Caco-2 (cell line): ENCODE measurements at regions of chr1 and their contacts with region 1.

Region 1: DNA sequence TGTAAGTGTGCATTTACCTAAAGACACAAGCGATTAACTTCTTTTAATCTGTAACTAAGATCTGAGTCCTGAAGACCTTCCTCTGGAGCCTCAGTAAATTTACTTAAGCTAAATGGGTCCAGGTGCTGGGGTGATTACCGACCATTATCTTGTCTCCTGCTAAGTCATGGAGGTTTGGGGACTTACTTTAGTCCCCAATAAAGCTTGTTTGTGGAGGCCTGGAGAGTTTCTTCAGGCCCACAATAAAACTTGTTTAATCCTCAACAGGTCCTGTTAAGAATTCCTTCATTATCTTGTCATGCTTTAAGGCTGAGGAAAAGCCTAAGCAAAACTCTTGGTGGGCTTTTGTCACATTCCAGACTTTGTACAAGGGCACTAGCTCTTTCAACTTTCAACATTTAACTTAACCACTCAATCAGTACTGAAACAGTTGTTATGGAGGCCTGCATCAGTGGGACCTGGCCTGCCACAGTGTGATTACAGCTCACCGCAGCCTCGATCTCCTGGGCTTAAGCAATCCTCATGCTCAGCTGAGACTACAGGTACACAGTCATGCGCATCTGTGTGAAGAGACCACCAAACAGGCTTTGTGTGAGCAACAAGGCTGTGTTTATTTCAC is 84.0 kb downstream of the FMO4 start:
- DNase-seq: peak; percentile 49 to 67
- H3K4me3 ChIP-seq: no peak overlapping the region
- H3K4me3 Mint-ChIP-seq: peak overlapping the region; percentile 60
- H3K27ac Mint-ChIP-seq: peak overlapping the region; percentile 96
- H3K4me1 ChIP-seq: peaks cover 68% of the 10 kb centered on the region
- H3K4me1 Mint-ChIP-seq: peaks cover 33% of the 10 kb centered on the region
- H3K27me3 ChIP-seq: no peaks in the 10 kb centered on the region
- H3K27me3 Mint-ChIP-seq: no peaks in the 10 kb centered on the region
- CTCF ChIP-seq: no peak

Region 2: GRCh38 chr1:171418616-171419015 is 20.7 kb after region 1 on chr1:
- CTCF ChIA-PET with region 1: no interaction called
- POLR2A ChIA-PET with region 1: no interaction called
- intact Hi-C with region 1: loop called (anchors 2 kb)
- DNase-seq: peak in 1 of 2 experiments; percentile 27
- H3K4me3 ChIP-seq: no peak overlapping the region
- H3K4me3 Mint-ChIP-seq: no peak overlapping the region
- H3K27ac Mint-ChIP-seq: peak overlapping the region; percentile 4
- H3K4me1 ChIP-seq: peaks cover 15% of the 10 kb centered on the region
- H3K4me1 Mint-ChIP-seq: peaks cover 12% of the 10 kb centered on the region
- H3K27me3 ChIP-seq: no peaks in the 10 kb centered on the region
- H3K27me3 Mint-ChIP-seq: no peaks in the 10 kb centered on the region
- CTCF ChIP-seq: no peak

Region 3: GRCh38 chr1:171460018-171460580 is 62.1 kb after region 1 on chr1:
- CTCF ChIA-PET with region 1: no interaction called
- POLR2A ChIA-PET with region 1: no interaction called
- intact Hi-C with region 1: loop called (anchors 1 kb)
- DNase-seq: peak; percentile 29 to 52
- H3K4me3 ChIP-seq: no peak overlapping the region
- H3K4me3 Mint-ChIP-seq: no peak overlapping the region
- H3K27ac Mint-ChIP-seq: peak overlapping the region; percentile 85
- H3K4me1 ChIP-seq: peaks cover 7% of the 10 kb centered on the region
- H3K4me1 Mint-ChIP-seq: peaks cover 19% of the 10 kb centered on the region
- H3K27me3 ChIP-seq: no peaks in the 10 kb centered on the region
- H3K27me3 Mint-ChIP-seq: no peaks in the 10 kb centered on the region
- CTCF ChIP-seq: no peak